Transverse colon (tissue), 4 donors: ENCODE measurements at regions of chr3 and their contacts with region 1.

Region 1: DNA sequence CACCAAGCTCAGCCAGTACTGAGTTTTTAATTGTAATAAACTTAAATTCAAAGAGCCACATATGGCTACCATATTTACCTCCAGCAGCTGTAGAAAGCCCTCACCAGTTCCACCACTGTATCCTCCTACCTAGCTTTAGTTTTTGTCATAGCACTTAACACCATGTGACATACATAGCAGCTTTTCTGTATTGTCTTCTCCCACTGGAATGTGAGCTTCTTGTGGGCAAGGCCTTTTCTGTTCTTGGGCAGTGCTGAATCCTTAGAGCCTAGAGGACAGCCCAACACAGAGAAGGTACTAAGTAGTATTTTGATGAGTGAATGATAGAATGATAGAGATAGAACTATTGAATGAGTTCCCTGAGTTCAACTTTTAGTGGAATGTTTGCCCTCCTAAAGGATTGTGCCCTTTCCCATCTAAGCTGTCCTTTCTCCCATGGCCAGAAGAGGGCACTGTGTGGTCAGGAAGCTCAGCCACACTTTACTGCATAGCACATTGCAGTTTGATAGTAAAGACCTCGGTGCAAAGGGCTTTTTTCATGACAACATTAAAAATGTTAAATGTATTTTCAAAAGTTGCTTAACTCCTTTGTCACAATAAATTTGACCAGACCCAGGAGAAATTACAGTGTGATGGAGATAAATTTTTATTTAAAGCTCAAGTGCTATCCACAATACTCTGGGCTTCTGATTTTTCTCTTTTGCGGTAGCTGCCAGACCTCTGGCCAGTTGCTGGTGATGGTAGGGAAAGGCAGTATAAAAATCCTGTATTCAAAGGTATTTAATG is 115.8 kb downstream of the GHSR start:
- DNase-seq: peak; percentile 75
- H3K4me3 ChIP-seq: no peak overlapping the region
- H3K27ac ChIP-seq: peak overlapping the region in 1 of 4 donors; percentile 30
- H3K4me1 ChIP-seq: peaks cover 0 to 4% (median 0%) of the 10 kb centered on the region in 4 donors
- H3K27me3 ChIP-seq: no peaks in the 10 kb centered on the region
- CTCF ChIP-seq: peak; percentile 83 to 93 (median 90)
- EP300 ChIP-seq: no peak
- POLR2A ChIP-seq: no peak

Region 2: DNA sequence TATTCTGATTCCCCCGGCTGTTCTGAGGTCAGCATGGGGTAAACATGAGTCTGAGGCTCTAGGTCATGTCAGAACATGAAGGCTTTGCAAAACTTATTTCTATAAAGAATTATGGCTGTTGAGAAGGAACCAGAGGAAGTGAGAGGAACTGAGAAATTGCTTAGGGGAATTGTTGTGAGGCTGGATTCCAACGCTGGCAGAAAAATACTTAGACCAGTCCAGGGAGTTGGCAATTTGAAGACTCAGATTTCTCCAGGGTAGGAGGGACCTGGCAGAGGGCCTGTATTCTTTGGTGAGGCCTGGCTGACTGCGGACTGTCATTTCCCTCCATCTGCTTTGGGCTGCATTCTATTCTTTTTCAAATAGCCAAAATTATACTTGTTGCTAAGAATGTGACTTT is 677.6 kb before region 1 on chr3:
- in situ Hi-C with region 1: loop called in 2 of 4 experiments (anchors 25 kb)
- intact Hi-C with region 1: no loop called
- DNase-seq: peak; percentile 14
- H3K4me3 ChIP-seq: no peak overlapping the region
- H3K27ac ChIP-seq: peak overlapping the region in 3 of 4 donors; percentile 25 to 29 (median 28)
- H3K4me1 ChIP-seq: peaks cover 0 to 5% (median 0%) of the 10 kb centered on the region in 4 donors
- H3K27me3 ChIP-seq: no peaks in the 10 kb centered on the region
- CTCF ChIP-seq: no peak
- EP300 ChIP-seq: no peak
- POLR2A ChIP-seq: no peak

Region 3: GRCh38 chr3:171829841-171830517 is 502.5 kb before region 1 on chr3:
- in situ Hi-C with region 1: loop called in 1 of 4 experiments (anchors 25 kb)
- intact Hi-C with region 1: no loop called
- DNase-seq: peak; percentile 72
- H3K4me3 ChIP-seq: no peak overlapping the region
- H3K27ac ChIP-seq: peak overlapping the region; percentile 3 to 42 (median 34)
- H3K4me1 ChIP-seq: peaks cover 0 to 32% (median 6%) of the 10 kb centered on the region in 4 donors
- H3K27me3 ChIP-seq: no peaks in the 10 kb centered on the region
- CTCF ChIP-seq: peak; percentile 55 to 74 (median 67)
- EP300 ChIP-seq: no peak
- POLR2A ChIP-seq: no peak

Region 4: GRCh38 chr3:172039436-172040077 is 292.9 kb before region 1 on chr3 and contains the start of gene FNDC3B:
- in situ Hi-C with region 1: loop called in 3 of 4 experiments (anchors 10 to 25 kb)
- intact Hi-C with region 1: loop called (anchors 2 kb)
- DNase-seq: peak; percentile 96
- H3K4me3 ChIP-seq: peak within 1 kb of the TSS; percentile 84 to 99 (median 88)
- H3K27ac ChIP-seq: peak within 1 kb of the TSS; percentile 97 to 99 (median 99)
- H3K4me1 ChIP-seq: peaks cover 0 to 43% (median 30%) of the 10 kb centered on the region in 4 donors
- H3K27me3 ChIP-seq: no peaks in the 10 kb centered on the region
- CTCF ChIP-seq: no peak
- EP300 ChIP-seq: no peak
- POLR2A ChIP-seq: peak; percentile 87
- total RNA-seq, gene FNDC3B: 28.5 to 85.7 (median 44.5) TPM